CD8-positive, alpha-beta T cell (primary cell): ENCODE measurements at regions of chr12 and their contacts with region 1.

Region 1: GRCh38 chr12:2284857-2285256 is 232.1 kb downstream of the CACNA1C start:
- DNase-seq: peak in 3 of 9 experiments; percentile 11 to 22 (median 15)
- ATAC-seq: no peak
- H3K4me3 ChIP-seq: no peak overlapping the region
- H3K4me3 Mint-ChIP-seq: no peak overlapping the region
- H3K27ac ChIP-seq: no peak overlapping the region
- H3K27ac Mint-ChIP-seq: no peak overlapping the region
- H3K4me1 ChIP-seq: no peaks in the 10 kb centered on the region
- H3K4me1 Mint-ChIP-seq: peaks cover 5% of the 10 kb centered on the region
- H3K27me3 ChIP-seq: no peaks in the 10 kb centered on the region
- H3K27me3 Mint-ChIP-seq: peaks cover 16% of the 10 kb centered on the region
- CTCF ChIP-seq: no peak

Region 2: GRCh38 chr12:442235-442884 is 1842.5 kb before region 1 on chr12:
- CTCF ChIA-PET with region 1: no interaction called
- POLR2A ChIA-PET with region 1: no interaction called
- intact Hi-C with region 1: no loop called
- DNase-seq: peak in 6 of 9 experiments; percentile 29 to 64 (median 58)
- ATAC-seq: no peak
- H3K4me3 ChIP-seq: no peak overlapping the region
- H3K4me3 Mint-ChIP-seq: no peak overlapping the region
- H3K27ac ChIP-seq: no peak overlapping the region
- H3K27ac Mint-ChIP-seq: no peak overlapping the region
- H3K4me1 ChIP-seq: no peaks in the 10 kb centered on the region
- H3K4me1 Mint-ChIP-seq: no peaks in the 10 kb centered on the region
- H3K27me3 ChIP-seq: no peaks in the 10 kb centered on the region
- H3K27me3 Mint-ChIP-seq: peaks cover 2% of the 10 kb centered on the region
- CTCF ChIP-seq: peak; percentile 74

Region 3: GRCh38 chr12:1907652-1908611 is 376.9 kb before region 1 on chr12:
- CTCF ChIA-PET with region 1: no interaction called
- POLR2A ChIA-PET with region 1: no interaction called
- intact Hi-C with region 1: no loop called
- DNase-seq: peak in 7 of 9 experiments; percentile 10 to 64 (median 42)
- ATAC-seq: peak; percentile 69
- H3K4me3 ChIP-seq: peak overlapping the region; percentile 8 to 35
- H3K4me3 Mint-ChIP-seq: peak overlapping the region; percentile 76
- H3K27ac ChIP-seq: no peak overlapping the region
- H3K27ac Mint-ChIP-seq: no peak overlapping the region
- H3K4me1 ChIP-seq: no peaks in the 10 kb centered on the region
- H3K4me1 Mint-ChIP-seq: peaks cover 9% of the 10 kb centered on the region
- H3K27me3 ChIP-seq: no peaks in the 10 kb centered on the region
- H3K27me3 Mint-ChIP-seq: peaks cover 8% of the 10 kb centered on the region
- CTCF ChIP-seq: no peak

Region 4: DNA sequence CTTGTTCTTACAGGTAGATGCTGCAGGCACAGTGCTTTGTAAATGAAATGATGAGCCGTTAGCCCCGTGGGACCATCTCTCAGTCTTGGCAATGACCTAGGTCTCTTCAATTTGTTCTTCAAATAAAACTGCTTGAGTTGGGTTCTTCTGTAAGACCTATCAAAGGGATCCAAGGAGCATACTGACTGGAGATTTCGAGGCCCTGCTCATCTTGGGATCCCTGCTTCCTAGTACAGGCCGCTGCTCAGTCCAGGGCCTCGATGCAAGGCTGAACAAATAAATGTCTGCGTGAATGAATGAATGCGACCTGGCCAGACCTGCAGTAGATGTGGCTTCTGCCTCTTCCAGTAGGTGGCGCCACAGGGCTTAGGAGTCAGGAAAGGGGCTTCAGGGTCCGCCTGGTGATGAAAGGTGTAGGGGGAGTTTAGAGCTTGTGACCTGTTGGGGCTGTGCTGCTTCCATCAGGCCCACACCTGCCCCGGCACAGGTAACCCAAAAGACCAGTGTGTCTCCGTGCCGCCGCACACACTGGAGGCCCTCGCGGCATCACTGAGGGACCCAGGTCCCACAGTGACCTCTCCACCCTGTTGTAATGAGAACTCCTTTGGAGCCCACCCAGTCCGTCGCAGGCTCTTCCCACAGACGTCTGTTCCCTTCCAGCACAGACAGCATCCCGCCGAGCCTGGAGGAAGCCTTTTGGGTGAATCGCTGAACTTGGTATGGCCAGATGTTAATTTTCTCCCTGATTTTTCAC is 227.6 kb before region 1 on chr12:
- CTCF ChIA-PET with region 1: no interaction called
- POLR2A ChIA-PET with region 1: no interaction called
- intact Hi-C with region 1: loop called in 1 of 2 experiments (anchors 2 kb)
- DNase-seq: peak in 6 of 9 experiments; percentile 17 to 47 (median 34)
- ATAC-seq: no peak
- H3K4me3 ChIP-seq: no peak overlapping the region
- H3K4me3 Mint-ChIP-seq: no peak overlapping the region
- H3K27ac ChIP-seq: no peak overlapping the region
- H3K27ac Mint-ChIP-seq: no peak overlapping the region
- H3K4me1 ChIP-seq: no peaks in the 10 kb centered on the region
- H3K4me1 Mint-ChIP-seq: peaks cover 12% of the 10 kb centered on the region
- H3K27me3 ChIP-seq: peaks cover 4 to 9% of the 10 kb centered on the region in 2 experiments
- H3K27me3 Mint-ChIP-seq: peaks cover 33% of the 10 kb centered on the region
- CTCF ChIP-seq: no peak